ENCODE measurements at regions of chr19 and their contacts with region 1.

Region 1: GRCh38 chr19:29714953-29715700 is at the start of gene C19orf12:
- DNase-seq: peak; percentile 61
- ATAC-seq: peak; percentile 80
- H3K4me3 Mint-ChIP-seq: peak within 1 kb of the TSS; percentile 71
- H3K27ac Mint-ChIP-seq: peak within 1 kb of the TSS; percentile 77
- H3K4me1 Mint-ChIP-seq: peaks cover 32% of the 10 kb centered on the region
- H3K27me3 Mint-ChIP-seq: no peaks in the 10 kb centered on the region
- CTCF ChIP-seq: no peak
- total RNA-seq, gene C19orf12: 15.5 to 19.0 TPM (median 17.2 TPM) in 3 replicates

Region 2: GRCh38 chr19:29622138-29623070 is 92.7 kb before region 1 on chr19:
- CTCF ChIA-PET with region 1: interaction called, 21 read pairs
- POLR2A ChIA-PET with region 1: no interaction called
- DNase-seq: no peak
- ATAC-seq: no peak
- H3K4me3 Mint-ChIP-seq: no peak overlapping the region
- H3K27ac Mint-ChIP-seq: no peak overlapping the region
- H3K4me1 Mint-ChIP-seq: peaks cover 8% of the 10 kb centered on the region
- H3K27me3 Mint-ChIP-seq: no peaks in the 10 kb centered on the region; the same call in 1 of the 2 replicates
- CTCF ChIP-seq: no peak

Region 3: GRCh38 chr19:29665215-29665825 is 49.8 kb before region 1 on chr19 and contains the start of gene PLEKHF1:
- CTCF ChIA-PET with region 1: interaction called, 13 read pairs
- POLR2A ChIA-PET with region 1: no interaction called
- DNase-seq: peak; percentile 90
- ATAC-seq: peak; percentile 77
- H3K4me3 Mint-ChIP-seq: peak within 1 kb of the TSS; percentile 77
- H3K27ac Mint-ChIP-seq: peak within 1 kb of the TSS; percentile 98
- H3K4me1 Mint-ChIP-seq: peaks cover 37% of the 10 kb centered on the region
- H3K27me3 Mint-ChIP-seq: no peaks in the 10 kb centered on the region
- CTCF ChIP-seq: no peak
- total RNA-seq, gene PLEKHF1: 10.8 to 17.9 TPM (median 14.0 TPM) in 3 replicates

Region 4: DNA sequence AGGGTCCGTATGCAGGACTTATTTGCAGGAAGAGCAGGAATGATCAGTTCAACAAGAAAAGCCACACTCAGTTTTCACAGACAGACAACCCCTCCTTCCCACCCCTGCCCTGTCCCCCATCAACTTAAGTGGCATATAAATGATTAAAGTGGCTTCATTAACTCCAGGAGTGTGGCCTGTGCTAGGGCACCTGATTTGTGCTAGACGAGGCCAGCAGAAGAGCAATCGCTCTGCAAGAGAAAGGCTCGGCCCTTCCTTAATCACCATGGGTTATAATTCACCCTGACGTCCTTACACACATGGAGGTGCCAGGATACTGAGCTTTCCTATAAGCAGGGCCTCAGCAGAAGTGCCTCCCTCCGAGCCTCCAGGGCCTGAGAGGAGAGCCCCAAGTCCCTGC is 14.6 kb before region 1 on chr19:
- CTCF ChIA-PET with region 1: interaction called, 18 read pairs
- POLR2A ChIA-PET with region 1: no interaction called
- DNase-seq: no peak
- ATAC-seq: no peak
- H3K4me3 Mint-ChIP-seq: no peak overlapping the region
- H3K27ac Mint-ChIP-seq: no peak overlapping the region
- H3K4me1 Mint-ChIP-seq: no peaks in the 10 kb centered on the region
- H3K27me3 Mint-ChIP-seq: no peaks in the 10 kb centered on the region
- CTCF ChIP-seq: no peak

Region 5: GRCh38 chr19:29873024-29873800 is 158.1 kb after region 1 on chr19:
- CTCF ChIA-PET with region 1: interaction called, 13 read pairs
- POLR2A ChIA-PET with region 1: no interaction called
- DNase-seq: peak; percentile 85
- ATAC-seq: peak; percentile 81
- H3K4me3 Mint-ChIP-seq: peak overlapping the region; percentile 73
- H3K27ac Mint-ChIP-seq: no peak overlapping the region
- H3K4me1 Mint-ChIP-seq: peaks cover 2% of the 10 kb centered on the region; the same call in 1 of the 2 replicates
- H3K27me3 Mint-ChIP-seq: peaks cover 26% of the 10 kb centered on the region
- CTCF ChIP-seq: peak; percentile 72